OCI-LY7 (cell line): ENCODE measurements at regions of chr1 and their contacts with region 1.

Region 1: DNA sequence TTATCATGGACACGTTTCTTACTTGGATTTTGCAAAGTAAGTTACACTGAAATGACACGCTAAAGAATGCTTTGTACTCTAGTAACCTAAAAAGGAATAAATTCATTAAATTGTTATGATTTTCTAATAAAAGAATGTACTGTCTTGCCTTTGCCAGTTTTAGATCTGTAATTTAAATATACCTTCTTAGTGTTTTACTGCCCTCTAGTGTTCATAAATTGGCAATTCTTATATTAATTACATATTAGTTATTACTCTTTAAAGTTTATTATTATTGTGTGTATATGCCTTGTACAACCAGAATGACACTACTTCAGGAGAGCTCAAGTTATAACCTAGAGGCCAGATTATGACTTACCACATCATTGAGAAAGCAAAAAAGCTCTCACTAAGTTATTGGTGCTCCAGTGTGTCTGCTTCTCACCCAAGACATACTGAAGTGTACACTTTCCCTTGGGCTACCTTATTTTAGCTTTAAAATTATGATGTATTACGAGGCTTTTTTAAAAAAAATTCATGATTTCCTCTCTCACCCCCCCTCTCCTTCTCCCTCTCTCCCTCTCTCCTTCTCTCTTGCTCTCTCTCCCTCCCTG is 169.9 kb downstream of the HS2ST1 start:
- DNase-seq: peak; percentile 77
- H3K4me3 ChIP-seq: no peak overlapping the region
- H3K27ac ChIP-seq: peak overlapping the region; percentile 64
- H3K4me1 ChIP-seq: peaks cover 36% of the 10 kb centered on the region
- CTCF ChIP-seq: peak; percentile 86

Region 2: DNA sequence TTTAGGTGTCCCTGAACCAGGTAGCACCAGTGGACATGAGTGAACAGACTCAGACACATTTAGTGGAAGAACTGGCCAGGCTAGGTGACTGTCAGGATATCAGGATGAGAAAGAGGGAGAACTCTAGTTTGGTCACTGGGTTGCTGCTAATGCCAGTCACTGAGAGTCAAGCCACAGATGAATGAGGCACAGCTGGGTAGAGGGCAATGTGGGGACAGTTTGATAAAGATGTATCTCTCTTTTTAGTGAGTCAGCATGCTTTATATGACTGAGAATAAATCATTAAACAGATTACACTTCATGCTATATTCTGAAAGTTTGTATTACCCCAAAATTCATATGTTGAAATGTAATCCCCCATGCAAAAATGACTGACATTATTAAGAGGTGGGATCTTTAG is 257.5 kb before region 1 on chr1:
- CTCF ChIA-PET with region 1: no interaction called
- POLR2A ChIA-PET with region 1: interaction called, 24 read pairs
- intact Hi-C with region 1: loop called (anchors 1 kb)
- DNase-seq: no peak
- H3K4me3 ChIP-seq: no peak overlapping the region
- H3K27ac ChIP-seq: peak overlapping the region; percentile 63
- H3K4me1 ChIP-seq: peaks cover 80% of the 10 kb centered on the region
- CTCF ChIP-seq: no peak

Region 3: DNA sequence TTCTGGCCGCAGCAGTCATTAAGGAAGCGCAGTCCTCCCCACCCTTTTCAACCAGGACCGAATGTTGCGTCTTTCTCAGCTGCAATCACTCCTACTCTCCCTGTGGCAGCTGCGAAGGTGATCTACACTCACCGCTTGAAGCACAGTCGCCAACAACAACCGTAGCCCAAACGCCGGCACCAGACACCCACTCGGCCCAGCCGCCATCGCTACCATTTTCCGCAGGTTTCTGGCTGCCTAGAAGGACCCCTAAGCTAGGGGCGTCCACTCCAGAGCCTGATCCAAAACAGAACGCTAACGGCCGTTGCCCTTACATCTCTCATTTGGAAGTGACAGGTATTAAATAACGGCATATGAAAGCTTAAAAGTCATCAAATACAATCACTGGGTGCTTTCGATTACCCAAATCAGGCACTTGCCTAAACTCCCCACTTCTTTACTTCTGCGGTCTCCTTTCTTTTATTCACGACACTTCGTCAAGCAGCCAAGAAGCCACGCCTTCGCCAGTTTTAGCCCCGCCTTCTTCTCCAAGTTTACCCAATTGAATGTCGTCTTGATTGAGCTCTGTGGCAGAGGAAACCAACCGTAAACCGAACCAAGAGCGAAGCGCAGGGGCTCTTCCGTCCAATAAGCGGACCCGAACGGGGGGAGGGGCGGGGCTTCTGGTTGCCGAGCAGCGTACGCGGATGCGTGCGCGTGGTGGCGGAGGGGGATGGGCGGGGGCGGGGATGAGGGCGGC is 170.3 kb before region 1 on chr1 and contains the start of gene SELENOF:
- CTCF ChIA-PET with region 1: interaction called, 5 read pairs
- POLR2A ChIA-PET with region 1: interaction called, 28 read pairs
- intact Hi-C with region 1: loop called (anchors 2 kb)
- DNase-seq: peak; percentile 100
- H3K4me3 ChIP-seq: peak within 1 kb of the TSS; percentile 94
- H3K27ac ChIP-seq: peak within 1 kb of the TSS; percentile 83
- H3K4me1 ChIP-seq: peaks cover 29% of the 10 kb centered on the region
- CTCF ChIP-seq: no peak
- total RNA-seq, gene SELENOF: 93.0 and 99.4 TPM in 2 replicates

Region 4: GRCh38 chr1:87051965-87052364 is 32.4 kb before region 1 on chr1:
- CTCF ChIA-PET with region 1: interaction called, 3 read pairs
- POLR2A ChIA-PET with region 1: interaction called, 10 read pairs
- intact Hi-C with region 1: loop called (anchors 2 kb)
- DNase-seq: peak; percentile 83
- H3K4me3 ChIP-seq: peak overlapping the region; percentile 57
- H3K27ac ChIP-seq: peak overlapping the region; percentile 98
- H3K4me1 ChIP-seq: peaks cover 81% of the 10 kb centered on the region
- CTCF ChIP-seq: no peak

Region 5: DNA sequence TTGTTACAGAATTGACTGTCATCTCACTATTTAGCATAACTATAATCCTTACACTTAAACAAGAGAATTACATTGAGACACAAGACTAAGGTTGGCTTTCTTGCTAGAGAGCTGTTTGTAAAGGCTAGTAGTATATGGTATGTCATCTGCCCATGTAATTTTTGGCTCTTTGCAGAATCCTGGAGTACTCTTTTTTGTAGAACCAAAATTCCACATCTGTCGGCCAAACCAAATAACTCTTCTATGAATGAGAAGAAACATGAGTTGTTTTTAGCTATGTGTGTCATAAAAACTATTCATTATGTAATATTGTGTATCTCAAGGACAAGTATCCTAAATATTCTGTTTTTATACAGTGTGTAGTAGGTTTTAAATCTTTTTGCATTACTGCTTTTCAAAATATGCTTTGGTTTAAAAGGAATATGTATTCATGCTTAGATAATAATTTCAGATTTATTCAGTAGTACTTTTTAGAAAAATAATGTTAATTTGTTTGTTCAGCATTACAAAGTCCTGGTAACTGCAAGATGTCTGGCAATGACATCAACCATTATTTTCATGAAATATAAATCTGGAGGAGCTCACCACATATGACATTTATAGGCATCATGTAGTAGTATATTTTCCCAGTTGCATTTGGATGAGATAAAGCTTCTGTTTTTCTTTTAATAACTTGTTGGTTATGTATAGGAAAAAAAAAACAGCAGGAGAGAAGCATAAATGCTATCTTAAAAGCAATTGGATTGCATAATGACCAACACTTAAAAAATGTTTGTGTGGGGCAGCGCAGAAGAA is 10.1 kb before region 1 on chr1:
- CTCF ChIA-PET with region 1: interaction called, 4 read pairs
- POLR2A ChIA-PET with region 1: interaction called, 22 read pairs
- intact Hi-C with region 1: no loop called
- DNase-seq: no peak
- H3K4me3 ChIP-seq: no peak overlapping the region
- H3K27ac ChIP-seq: no peak overlapping the region
- H3K4me1 ChIP-seq: peaks cover 19% of the 10 kb centered on the region
- CTCF ChIP-seq: no peak

Region 6: GRCh38 chr1:87180682-87181081 is 96.3 kb after region 1 on chr1:
- CTCF ChIA-PET with region 1: no interaction called
- POLR2A ChIA-PET with region 1: no interaction called
- intact Hi-C with region 1: no loop called
- DNase-seq: no peak
- H3K4me3 ChIP-seq: no peak overlapping the region
- H3K27ac ChIP-seq: no peak overlapping the region
- H3K4me1 ChIP-seq: no peaks in the 10 kb centered on the region
- CTCF ChIP-seq: no peak

Region 7: DNA sequence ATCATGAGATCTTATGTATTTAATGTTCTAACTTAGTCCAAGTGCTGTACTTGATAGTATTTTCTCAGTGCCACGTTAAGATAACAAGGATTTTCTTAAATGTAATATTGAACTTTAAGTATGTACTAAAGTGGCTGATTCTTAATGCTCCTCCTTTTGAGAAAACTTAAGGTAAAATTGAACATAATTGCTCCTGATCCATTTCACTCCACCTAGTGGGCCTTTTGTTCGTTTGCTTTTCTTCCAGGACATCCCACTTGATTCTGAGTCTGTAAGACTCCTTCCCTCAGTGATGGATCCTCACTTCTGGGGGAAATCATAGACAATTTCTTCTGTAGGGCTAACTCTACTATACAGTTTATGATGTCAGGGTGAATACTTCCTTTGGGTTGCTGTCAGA is 417.4 kb after region 1 on chr1:
- CTCF ChIA-PET with region 1: no interaction called
- POLR2A ChIA-PET with region 1: no interaction called
- intact Hi-C with region 1: no loop called
- DNase-seq: no peak
- H3K4me3 ChIP-seq: no peak overlapping the region
- H3K27ac ChIP-seq: no peak overlapping the region
- H3K4me1 ChIP-seq: no peaks in the 10 kb centered on the region
- CTCF ChIP-seq: no peak